T-cell (primary cell): ENCODE measurements at regions of chr11 and their contacts with region 1.

Region 1: DNA sequence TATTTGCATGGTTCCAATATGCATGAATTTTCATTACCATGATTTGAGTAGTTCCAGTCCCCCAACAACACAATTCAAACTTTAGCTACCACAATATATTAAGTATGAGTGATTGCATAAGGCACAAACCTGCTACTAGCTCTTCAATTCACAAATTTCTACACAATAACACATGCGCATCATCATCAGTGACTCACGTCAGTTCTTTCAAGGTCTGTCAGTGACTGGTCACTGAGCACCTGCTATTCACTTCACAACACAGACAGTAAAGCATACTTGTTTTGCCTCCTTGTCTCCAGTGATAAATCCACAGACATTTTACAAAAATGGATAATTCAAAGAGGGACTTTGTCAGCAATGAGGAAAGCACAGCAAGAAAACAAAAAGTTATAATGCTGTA is 435.1 kb upstream of the CCDC90B start:
- DNase-seq: no peak
- ATAC-seq: no peak
- H3K4me3 ChIP-seq: no peak overlapping the region
- H3K4me3 Mint-ChIP-seq: no peak overlapping the region
- H3K27ac ChIP-seq: no peak overlapping the region
- H3K27ac Mint-ChIP-seq: no peak overlapping the region
- H3K4me1 ChIP-seq: no peaks in the 10 kb centered on the region
- H3K4me1 Mint-ChIP-seq: peaks cover 0 to 14% (median 6%) of the 10 kb centered on the region in 3 donors
- H3K27me3 ChIP-seq: peaks cover 0 to 2% of the 10 kb centered on the region in 2 experiments
- H3K27me3 Mint-ChIP-seq: peaks cover 4 to 5% of the 10 kb centered on the region in 2 donors

Region 2: GRCh38 chr11:83691451-83691950 is 29.8 kb before region 1 on chr11:
- CTCF ChIA-PET with region 1: interaction called in 1 of 2 experiments, 14 read pairs
- POLR2A ChIA-PET with region 1: no interaction called
- DNase-seq: no peak
- ATAC-seq: no peak
- H3K4me3 ChIP-seq: no peak overlapping the region
- H3K4me3 Mint-ChIP-seq: no peak overlapping the region
- H3K27ac ChIP-seq: no peak overlapping the region
- H3K27ac Mint-ChIP-seq: no peak overlapping the region
- H3K4me1 ChIP-seq: no peaks in the 10 kb centered on the region
- H3K4me1 Mint-ChIP-seq: no peaks in the 10 kb centered on the region
- H3K27me3 ChIP-seq: no peaks in the 10 kb centered on the region
- H3K27me3 Mint-ChIP-seq: peaks cover 0 to 3% of the 10 kb centered on the region in 2 donors

Region 3: DNA sequence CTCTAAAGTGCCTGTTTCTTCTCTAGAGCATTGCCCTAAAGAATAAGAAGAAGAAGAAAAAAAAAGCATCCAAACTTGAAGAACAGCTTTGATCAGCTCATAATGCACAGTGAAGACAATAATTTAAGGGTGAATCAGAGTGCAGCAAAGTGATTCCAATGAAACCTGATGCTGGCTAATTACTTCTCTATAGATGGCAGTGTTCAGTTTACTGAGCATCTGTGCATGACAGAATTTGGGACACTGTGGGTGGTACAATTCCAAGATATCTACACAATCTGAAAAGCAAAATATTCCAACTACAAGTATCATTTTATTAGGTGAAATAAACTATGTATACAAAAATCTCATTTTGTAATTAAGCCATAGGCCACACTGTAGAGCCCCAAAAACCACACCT is 15.4 kb after region 1 on chr11:
- CTCF ChIA-PET with region 1: no interaction called
- POLR2A ChIA-PET with region 1: no interaction called
- DNase-seq: no peak
- ATAC-seq: no peak
- H3K4me3 ChIP-seq: no peak overlapping the region
- H3K4me3 Mint-ChIP-seq: no peak overlapping the region
- H3K27ac ChIP-seq: no peak overlapping the region
- H3K27ac Mint-ChIP-seq: no peak overlapping the region
- H3K4me1 ChIP-seq: no peaks in the 10 kb centered on the region
- H3K4me1 Mint-ChIP-seq: no peaks in the 10 kb centered on the region
- H3K27me3 ChIP-seq: no peaks in the 10 kb centered on the region
- H3K27me3 Mint-ChIP-seq: peaks cover 0 to 19% of the 10 kb centered on the region in 2 donors

Region 4: GRCh38 chr11:85385547-85385946 is 1664.3 kb after region 1 on chr11:
- CTCF ChIA-PET with region 1: no interaction called
- POLR2A ChIA-PET with region 1: no interaction called
- DNase-seq: no peak
- ATAC-seq: no peak
- H3K4me3 ChIP-seq: no peak overlapping the region
- H3K4me3 Mint-ChIP-seq: no peak overlapping the region
- H3K27ac ChIP-seq: no peak overlapping the region
- H3K27ac Mint-ChIP-seq: no peak overlapping the region
- H3K4me1 ChIP-seq: no peaks in the 10 kb centered on the region
- H3K4me1 Mint-ChIP-seq: no peaks in the 10 kb centered on the region
- H3K27me3 ChIP-seq: no peaks in the 10 kb centered on the region
- H3K27me3 Mint-ChIP-seq: no peaks in the 10 kb centered on the region